AG04449 (cell line): ENCODE measurements at regions of chr18 and their contacts with region 1.

Region 1: DNA sequence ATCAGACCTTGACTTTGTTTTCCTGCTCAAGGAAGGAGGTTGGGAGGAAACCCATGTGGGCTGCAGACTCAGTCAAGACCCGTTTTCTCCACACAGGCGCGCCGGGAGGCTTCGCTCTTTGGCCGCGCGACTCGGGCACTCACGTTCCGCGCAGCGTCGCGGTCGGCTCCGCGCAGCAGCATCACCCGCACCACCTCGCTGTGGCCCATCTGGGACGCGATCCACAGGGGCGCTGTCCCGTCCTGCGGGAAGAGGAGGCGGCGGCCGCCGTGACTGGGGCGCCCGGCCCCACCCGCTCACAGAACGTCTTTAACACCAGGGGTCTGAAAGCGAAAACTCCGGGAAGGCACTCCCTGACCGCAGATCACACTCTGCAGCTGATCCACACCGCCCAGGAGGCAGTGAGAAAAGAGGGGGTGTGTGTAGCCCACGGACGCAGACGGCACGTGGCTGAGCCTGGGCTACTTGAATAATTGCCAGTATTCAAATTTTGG is 33.1 kb upstream of the NPC1 start:
- DNase-seq: no peak
- H3K4me3 ChIP-seq: peak overlapping the region; percentile 57
- CTCF ChIP-seq: peak; percentile 0

Region 2: DNA sequence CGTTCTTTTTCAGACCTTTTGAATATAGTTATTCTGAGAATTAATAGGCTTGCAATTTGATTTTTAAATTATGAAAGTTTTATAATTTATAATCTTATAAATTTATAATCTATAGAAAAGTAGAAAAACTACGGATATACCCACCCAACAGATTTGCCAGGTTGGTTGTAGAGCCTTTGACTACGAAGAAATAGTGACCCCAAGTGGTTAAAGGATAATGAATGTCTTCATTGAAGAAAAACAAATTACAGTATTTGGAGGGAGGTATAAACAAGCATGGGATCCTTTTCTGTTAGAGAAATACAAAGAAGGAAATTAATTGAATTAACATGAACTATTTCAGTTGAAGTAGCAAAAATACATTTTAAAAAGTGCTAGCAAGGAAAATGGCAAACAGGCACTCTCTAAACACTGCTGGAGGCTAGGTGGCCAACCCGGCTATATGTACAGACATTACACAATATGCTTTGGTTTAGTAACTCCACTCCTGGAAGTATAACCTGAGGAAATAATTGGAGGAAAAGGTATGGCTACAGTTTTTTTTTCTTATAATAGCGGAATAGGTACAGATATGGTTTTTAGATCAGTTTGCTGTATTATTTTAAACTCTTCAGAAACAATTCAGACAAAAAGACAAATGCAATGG is 1768.0 kb before region 1 on chr18:
- CTCF ChIA-PET with region 1: no interaction called
- POLR2A ChIA-PET with region 1: no interaction called
- DNase-seq: no peak
- H3K4me3 ChIP-seq: no peak overlapping the region
- CTCF ChIP-seq: no peak

Region 3: DNA sequence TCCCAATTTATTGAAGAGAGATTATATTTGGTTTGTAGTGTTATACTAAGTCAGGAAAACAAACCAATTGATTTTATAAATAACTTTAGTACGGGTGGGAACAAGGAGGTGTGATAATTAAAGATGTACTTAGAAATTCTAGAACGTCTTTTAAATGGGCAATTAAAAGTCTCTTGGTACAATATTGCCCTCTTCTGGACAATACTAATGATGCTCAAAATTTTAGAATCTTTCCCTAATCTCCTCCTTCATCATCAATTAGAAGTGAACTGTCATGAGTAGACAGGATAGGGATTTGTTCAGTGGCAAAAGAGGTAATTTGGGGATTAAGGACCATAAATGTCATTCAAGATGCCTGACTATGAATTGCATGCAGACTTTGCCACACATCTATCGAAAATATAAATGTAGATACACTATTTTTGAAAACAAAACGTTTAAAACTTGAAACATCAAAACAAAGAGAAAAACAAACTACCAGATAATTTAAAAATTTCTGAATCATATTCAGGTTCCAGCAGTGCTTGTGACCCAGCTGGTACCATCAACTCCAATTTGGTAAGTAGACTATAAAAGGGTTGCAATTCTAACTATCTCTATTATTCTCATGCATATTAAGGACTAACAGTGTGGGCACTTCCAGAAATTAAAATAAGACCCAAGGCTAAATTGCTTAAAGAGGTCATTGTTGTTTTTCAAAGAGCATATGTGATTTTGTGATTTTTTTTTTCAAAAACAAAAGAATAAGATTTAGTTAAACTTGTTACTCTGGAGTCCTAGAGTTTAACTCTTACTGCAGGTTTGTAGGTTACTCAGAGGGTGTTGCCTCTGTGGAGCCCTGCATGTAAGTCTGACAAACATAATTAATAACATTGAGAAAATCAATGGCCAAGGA is 193.4 kb after region 1 on chr18:
- CTCF ChIA-PET with region 1: interaction called, 104 read pairs
- POLR2A ChIA-PET with region 1: no interaction called
- DNase-seq: no peak
- H3K4me3 ChIP-seq: no peak overlapping the region
- CTCF ChIP-seq: peak; percentile 23